ENCODE measurements at regions of chrX and their contacts with region 1.

Region 1: DNA sequence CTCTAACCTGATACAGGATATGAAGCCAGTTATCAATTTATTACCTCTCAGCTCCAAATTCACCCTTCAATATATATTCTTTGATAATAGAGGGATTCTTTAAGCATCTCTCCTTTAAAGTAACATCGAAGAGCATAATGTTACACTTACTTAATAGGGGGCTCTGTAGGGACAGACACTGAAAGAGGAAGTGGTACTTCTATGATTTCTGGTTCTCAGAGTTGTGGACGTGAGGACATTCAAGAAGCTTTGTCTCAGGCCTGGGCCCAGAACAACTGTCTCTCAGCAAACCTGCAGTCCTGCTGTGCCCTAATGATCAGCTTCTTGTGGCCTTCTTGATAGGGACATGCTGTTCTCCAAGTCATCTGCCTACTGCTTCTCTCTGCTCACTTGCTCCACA is 4.2 kb upstream of the ZXDB start:
- DNase-seq: no peak
- ATAC-seq: no peak
- H3K4me3 ChIP-seq: no peak overlapping the region
- H3K27ac ChIP-seq: no peak overlapping the region
- H3K4me1 ChIP-seq: peaks cover 21% of the 10 kb centered on the region
- H3K27me3 ChIP-seq: no peaks in the 10 kb centered on the region
- CTCF ChIP-seq: no peak

Region 2: GRCh38 chrX:57918750-57919436 is 331.3 kb after region 1 on chrX:
- CTCF ChIA-PET with region 1: no interaction called
- POLR2A ChIA-PET with region 1: no interaction called
- intact Hi-C with region 1: loop called (anchors 5 kb)
- DNase-seq: peak; percentile 71
- ATAC-seq: peak; percentile 49
- H3K4me3 ChIP-seq: no peak overlapping the region; the same call in 1 of the 2 replicates
- H3K27ac ChIP-seq: no peak overlapping the region
- H3K4me1 ChIP-seq: no peaks in the 10 kb centered on the region
- H3K27me3 ChIP-seq: no peaks in the 10 kb centered on the region
- CTCF ChIP-seq: peak; percentile 59

Region 3: GRCh38 chrX:58025979-58026378 is 438.4 kb after region 1 on chrX:
- CTCF ChIA-PET with region 1: no interaction called
- POLR2A ChIA-PET with region 1: no interaction called
- intact Hi-C with region 1: loop called (anchors 10 kb)
- DNase-seq: peak; percentile 51
- ATAC-seq: peak; percentile 54; the same call in 1 of the 2 replicates
- H3K4me3 ChIP-seq: no peak overlapping the region
- H3K27ac ChIP-seq: no peak overlapping the region
- H3K4me1 ChIP-seq: no peaks in the 10 kb centered on the region
- H3K27me3 ChIP-seq: no peaks in the 10 kb centered on the region
- CTCF ChIP-seq: peak; percentile 72

Measured in PC-3 (cell line).